GM12878 (cell line): ENCODE measurements at regions of chr1 and their contacts with region 1.

Region 1: DNA sequence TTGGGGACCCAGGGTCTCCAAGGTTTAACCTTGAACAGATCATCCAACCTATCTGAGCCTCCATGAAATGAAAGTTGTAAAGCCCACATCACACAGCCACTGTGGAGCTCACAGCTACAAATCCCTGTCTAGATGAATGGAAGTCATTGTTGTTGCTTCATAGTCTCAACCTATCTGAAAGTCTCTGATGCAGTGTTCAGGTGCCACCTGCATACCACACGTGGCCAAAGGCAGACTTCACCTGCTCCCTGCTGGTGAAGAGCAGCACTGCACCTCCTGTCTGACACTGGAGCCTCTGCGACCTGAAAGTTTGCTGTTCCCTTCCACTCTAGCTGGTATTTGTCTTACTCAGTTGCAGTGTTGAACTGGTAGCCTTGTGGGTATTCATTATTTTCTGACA is 18.3 kb downstream of the LORICRIN start:
- DNase-seq: no peak
- ATAC-seq: peak; percentile 99
- H3K4me3 ChIP-seq: no peak overlapping the region
- H3K27ac ChIP-seq: no peak overlapping the region
- H3K4me1 ChIP-seq: peaks cover under 1% of the 10 kb centered on the region; the same call in 1 of the 2 replicates
- H3K27me3 ChIP-seq: no peaks in the 10 kb centered on the region
- CTCF ChIP-seq: peak; percentile 87 to 91 (median 90)
- EP300 ChIP-seq: no peak
- POLR2A ChIP-seq: no peak
- RAD21 ChIP-seq: peak; percentile 70

Region 2: GRCh38 chr1:152654110-152654509 is 623.7 kb before region 1 on chr1:
- CTCF ChIA-PET with region 1: no interaction called
- POLR2A ChIA-PET with region 1: no interaction called
- RAD21 ChIA-PET with region 1: interaction called, 3 read pairs
- SMC1A ChIA-PET with region 1: interaction called, 5 read pairs
- in situ Hi-C with region 1: no loop called
- intact Hi-C with region 1: loop called (anchors 5 kb)
- DNase-seq: no peak
- ATAC-seq: peak; percentile 93
- H3K4me3 ChIP-seq: no peak overlapping the region
- H3K27ac ChIP-seq: no peak overlapping the region
- H3K4me1 ChIP-seq: no peaks in the 10 kb centered on the region
- H3K27me3 ChIP-seq: peaks cover 0 to 9% of the 10 kb centered on the region in 2 experiments; a peak in 2 of 4 replicates
- CTCF ChIP-seq: peak; percentile 68 to 84 (median 80)
- EP300 ChIP-seq: no peak
- POLR2A ChIP-seq: no peak
- RAD21 ChIP-seq: peak; percentile 77

Region 3: DNA sequence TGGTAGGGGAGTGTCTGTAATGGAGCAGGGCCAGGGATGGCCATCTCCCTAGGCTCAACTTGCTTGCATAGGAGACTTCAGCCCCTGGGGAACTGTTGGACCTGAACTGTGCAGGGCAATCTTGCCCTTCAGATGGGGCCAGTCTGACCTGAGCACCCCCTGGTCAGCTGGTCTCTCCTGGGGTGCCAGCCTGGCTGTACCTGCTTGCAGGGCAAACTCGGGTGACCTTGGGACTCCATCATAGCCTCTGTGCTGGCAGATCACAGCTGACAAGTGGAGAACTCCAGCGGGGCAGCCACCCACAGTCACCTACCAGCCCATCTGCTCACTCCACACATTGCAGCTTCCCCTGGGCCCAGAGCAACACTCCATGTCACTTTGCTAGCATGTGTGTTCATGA is 228.6 kb before region 1 on chr1:
- CTCF ChIA-PET with region 1: no interaction called
- POLR2A ChIA-PET with region 1: no interaction called
- RAD21 ChIA-PET with region 1: no interaction called
- SMC1A ChIA-PET with region 1: no interaction called
- in situ Hi-C with region 1: no loop called
- intact Hi-C with region 1: no loop called
- DNase-seq: no peak
- ATAC-seq: no peak
- H3K4me3 ChIP-seq: no peak overlapping the region
- H3K27ac ChIP-seq: no peak overlapping the region
- H3K4me1 ChIP-seq: no peaks in the 10 kb centered on the region
- H3K27me3 ChIP-seq: peaks cover 0 to 3% of the 10 kb centered on the region in 2 experiments; a peak in 1 of 4 replicates
- CTCF ChIP-seq: no peak
- EP300 ChIP-seq: no peak
- POLR2A ChIP-seq: no peak
- RAD21 ChIP-seq: no peak

Region 4: GRCh38 chr1:153238536-153238935 is 39.3 kb before region 1 on chr1:
- CTCF ChIA-PET with region 1: interaction called, 22 read pairs
- POLR2A ChIA-PET with region 1: no interaction called
- RAD21 ChIA-PET with region 1: interaction called, 12 read pairs
- SMC1A ChIA-PET with region 1: interaction called, 23 read pairs
- in situ Hi-C with region 1: no loop called
- intact Hi-C with region 1: loop called (anchors 1 kb)
- DNase-seq: no peak
- ATAC-seq: peak; percentile 68
- H3K4me3 ChIP-seq: no peak overlapping the region
- H3K27ac ChIP-seq: no peak overlapping the region
- H3K4me1 ChIP-seq: no peaks in the 10 kb centered on the region
- H3K27me3 ChIP-seq: no peaks in the 10 kb centered on the region; a peak in 2 of 4 replicates
- CTCF ChIP-seq: peak; percentile 24 to 42 (median 31); a peak in 5 of 6 replicates
- EP300 ChIP-seq: no peak
- POLR2A ChIP-seq: no peak
- RAD21 ChIP-seq: peak; percentile 36

Region 5: GRCh38 chr1:153253693-153254092 is 24.1 kb before region 1 on chr1:
- CTCF ChIA-PET with region 1: interaction called, 9 read pairs
- POLR2A ChIA-PET with region 1: interaction called, 3 read pairs
- RAD21 ChIA-PET with region 1: no interaction called
- SMC1A ChIA-PET with region 1: interaction called, 12 read pairs
- in situ Hi-C with region 1: no loop called
- intact Hi-C with region 1: no loop called
- DNase-seq: no peak
- ATAC-seq: peak; percentile 92
- H3K4me3 ChIP-seq: no peak overlapping the region
- H3K27ac ChIP-seq: no peak overlapping the region
- H3K4me1 ChIP-seq: no peaks in the 10 kb centered on the region
- H3K27me3 ChIP-seq: no peaks in the 10 kb centered on the region
- CTCF ChIP-seq: no peak
- EP300 ChIP-seq: no peak
- POLR2A ChIP-seq: no peak
- RAD21 ChIP-seq: no peak

Region 6: DNA sequence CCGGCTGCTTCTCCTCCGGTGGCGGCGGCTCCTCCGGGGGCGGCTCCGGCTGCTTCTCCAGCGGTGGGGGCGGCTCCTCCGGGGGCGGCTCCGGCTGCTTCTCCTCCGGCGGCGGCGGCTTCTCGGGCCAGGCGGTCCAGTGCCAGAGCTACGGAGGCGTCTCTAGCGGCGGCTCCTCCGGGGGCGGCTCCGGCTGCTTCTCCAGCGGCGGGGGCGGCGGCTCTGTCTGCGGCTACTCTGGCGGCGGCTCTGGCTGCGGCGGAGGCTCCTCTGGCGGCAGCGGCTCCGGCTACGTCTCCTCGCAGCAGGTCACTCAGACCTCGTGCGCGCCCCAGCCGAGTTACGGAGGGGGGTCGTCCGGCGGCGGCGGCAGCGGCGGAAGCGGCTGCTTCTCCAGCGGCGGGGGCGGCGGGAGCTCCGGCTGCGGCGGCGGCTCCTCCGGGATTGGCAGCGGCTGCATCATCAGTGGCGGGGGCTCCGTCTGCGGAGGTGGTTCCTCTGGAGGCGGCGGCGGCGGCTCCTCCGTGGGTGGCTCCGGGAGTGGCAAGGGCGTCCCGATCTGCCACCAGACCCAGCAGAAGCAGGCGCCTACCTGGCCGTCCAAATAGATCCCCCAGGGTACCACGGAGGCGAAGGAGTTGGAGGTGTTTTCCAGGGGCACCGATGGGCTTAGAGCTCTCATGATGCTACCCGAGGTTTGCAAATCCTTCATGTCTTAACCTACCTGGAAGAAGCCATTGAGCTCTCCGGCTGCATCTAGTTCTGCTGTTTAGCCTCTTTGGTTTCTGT is 16.3 kb before region 1 on chr1:
- CTCF ChIA-PET with region 1: interaction called, 5 read pairs
- POLR2A ChIA-PET with region 1: interaction called, 7 read pairs
- RAD21 ChIA-PET with region 1: interaction called, 14 read pairs
- SMC1A ChIA-PET with region 1: interaction called, 16 read pairs
- in situ Hi-C with region 1: no loop called
- intact Hi-C with region 1: no loop called
- DNase-seq: no peak
- ATAC-seq: peak; percentile 26
- H3K4me3 ChIP-seq: peak overlapping the region; percentile 50; the same call in 1 of the 2 replicates
- H3K27ac ChIP-seq: no peak overlapping the region
- H3K4me1 ChIP-seq: peaks cover 15% of the 10 kb centered on the region
- H3K27me3 ChIP-seq: 0 out of 4 replicates have a peak, but pooled peaks cover 0 to 4% of the 10 kb centered on the region in 2 experiments
- CTCF ChIP-seq: no peak
- EP300 ChIP-seq: no peak
- POLR2A ChIP-seq: no peak
- RAD21 ChIP-seq: no peak